ENCODE measurements at regions of chr4 and their contacts with region 1.

Region 1: DNA sequence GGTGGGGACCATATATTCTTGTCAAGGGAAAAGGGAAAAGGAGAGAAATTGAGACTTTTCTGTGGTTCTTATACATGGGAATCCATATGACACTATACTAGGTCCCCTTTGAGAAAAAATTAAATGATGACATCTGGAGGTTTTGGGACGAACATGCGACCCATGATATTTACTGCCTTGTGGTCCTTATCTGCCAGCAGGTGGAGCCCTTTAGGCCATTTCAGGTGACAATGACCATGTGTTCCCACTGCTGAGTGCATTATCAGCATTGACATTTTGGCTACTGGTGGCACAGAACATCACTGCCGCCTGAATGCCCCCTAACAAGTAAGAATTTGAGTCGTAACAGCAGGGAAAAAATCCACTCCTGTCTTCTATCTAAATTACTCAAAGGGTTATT is 843.4 kb downstream of the FSTL5 start:
- DNase-seq: peak; percentile 56
- ATAC-seq: peak; percentile 91
- H3K4me3 ChIP-seq: no peak overlapping the region
- H3K27ac ChIP-seq: no peak overlapping the region
- H3K4me1 ChIP-seq: no peaks in the 10 kb centered on the region
- H3K27me3 ChIP-seq: no peaks in the 10 kb centered on the region
- CTCF ChIP-seq: peak; percentile 63 to 89 (median 74)
- POLR2A ChIP-seq: no peak
- RAD21 ChIP-seq: peak; percentile 63

Region 2: DNA sequence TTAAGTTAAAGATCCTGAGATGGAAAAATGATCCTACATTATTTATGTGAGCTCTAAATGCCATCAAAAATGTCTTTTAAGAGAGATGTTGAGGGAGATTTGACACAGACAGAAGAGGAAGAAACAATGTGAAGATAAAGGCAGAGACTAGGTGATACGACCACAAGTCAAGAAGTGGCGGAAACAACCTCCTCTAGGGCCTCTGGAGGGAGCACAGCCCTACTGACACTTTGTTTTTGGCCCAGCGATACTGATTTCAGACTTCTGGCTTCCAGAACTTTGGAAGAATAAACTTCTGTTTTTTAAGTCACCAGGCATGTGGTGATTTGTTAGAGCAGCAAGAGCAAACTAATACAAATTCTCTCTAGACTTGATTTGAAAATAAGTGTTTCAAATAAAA is 372.7 kb before region 1 on chr4:
- CTCF ChIA-PET with region 1: no interaction called
- POLR2A ChIA-PET with region 1: no interaction called
- RAD21 ChIA-PET with region 1: no interaction called
- intact Hi-C with region 1: no loop called
- DNase-seq: no peak
- ATAC-seq: no peak
- H3K4me3 ChIP-seq: no peak overlapping the region
- H3K27ac ChIP-seq: no peak overlapping the region
- H3K4me1 ChIP-seq: no peaks in the 10 kb centered on the region
- H3K27me3 ChIP-seq: no peaks in the 10 kb centered on the region
- CTCF ChIP-seq: 0 out of 6 replicates have a peak, but pooled peaks of 1 of the 3 experiments have one; percentile 8
- POLR2A ChIP-seq: no peak
- RAD21 ChIP-seq: no peak

Region 3: GRCh38 chr4:161160718-161161117 is 159.7 kb before region 1 on chr4:
- CTCF ChIA-PET with region 1: no interaction called
- POLR2A ChIA-PET with region 1: no interaction called
- RAD21 ChIA-PET with region 1: no interaction called
- intact Hi-C with region 1: no loop called
- DNase-seq: no peak
- ATAC-seq: no peak
- H3K4me3 ChIP-seq: no peak overlapping the region
- H3K27ac ChIP-seq: no peak overlapping the region
- H3K4me1 ChIP-seq: no peaks in the 10 kb centered on the region
- H3K27me3 ChIP-seq: no peaks in the 10 kb centered on the region
- CTCF ChIP-seq: no peak
- POLR2A ChIP-seq: no peak
- RAD21 ChIP-seq: no peak

Region 4: GRCh38 chr4:161256716-161257115 is 63.7 kb before region 1 on chr4:
- CTCF ChIA-PET with region 1: no interaction called
- POLR2A ChIA-PET with region 1: no interaction called
- RAD21 ChIA-PET with region 1: no interaction called
- intact Hi-C with region 1: no loop called
- DNase-seq: peak; percentile 7
- ATAC-seq: peak; percentile 63
- H3K4me3 ChIP-seq: no peak overlapping the region
- H3K27ac ChIP-seq: no peak overlapping the region
- H3K4me1 ChIP-seq: no peaks in the 10 kb centered on the region
- H3K27me3 ChIP-seq: no peaks in the 10 kb centered on the region
- CTCF ChIP-seq: peak in 2 of 3 experiments; percentile 32 to 49; a peak in 4 of 6 replicates
- POLR2A ChIP-seq: no peak
- RAD21 ChIP-seq: peak; percentile 43

Region 5: GRCh38 chr4:161841759-161842158 is 521.4 kb after region 1 on chr4:
- CTCF ChIA-PET with region 1: no interaction called
- POLR2A ChIA-PET with region 1: no interaction called
- RAD21 ChIA-PET with region 1: no interaction called
- intact Hi-C with region 1: loop called (anchors 10 kb)
- DNase-seq: no peak
- ATAC-seq: peak; percentile 61; the same call in 1 of the 2 replicates
- H3K4me3 ChIP-seq: no peak overlapping the region
- H3K27ac ChIP-seq: no peak overlapping the region
- H3K4me1 ChIP-seq: no peaks in the 10 kb centered on the region
- H3K27me3 ChIP-seq: no peaks in the 10 kb centered on the region
- CTCF ChIP-seq: peak in 1 of 3 experiments; percentile 10; a peak in 1 of 6 replicates
- POLR2A ChIP-seq: no peak
- RAD21 ChIP-seq: peak; percentile 23; the same call in 1 of the 2 replicates

Region 6: GRCh38 chr4:161949946-161950725 is 629.8 kb after region 1 on chr4:
- CTCF ChIA-PET with region 1: no interaction called
- POLR2A ChIA-PET with region 1: no interaction called
- RAD21 ChIA-PET with region 1: no interaction called
- intact Hi-C with region 1: loop called (anchors 10 kb)
- DNase-seq: no peak
- ATAC-seq: no peak
- H3K4me3 ChIP-seq: no peak overlapping the region
- H3K27ac ChIP-seq: no peak overlapping the region
- H3K4me1 ChIP-seq: no peaks in the 10 kb centered on the region
- H3K27me3 ChIP-seq: no peaks in the 10 kb centered on the region
- CTCF ChIP-seq: no peak
- POLR2A ChIP-seq: no peak
- RAD21 ChIP-seq: no peak

Region 7: DNA sequence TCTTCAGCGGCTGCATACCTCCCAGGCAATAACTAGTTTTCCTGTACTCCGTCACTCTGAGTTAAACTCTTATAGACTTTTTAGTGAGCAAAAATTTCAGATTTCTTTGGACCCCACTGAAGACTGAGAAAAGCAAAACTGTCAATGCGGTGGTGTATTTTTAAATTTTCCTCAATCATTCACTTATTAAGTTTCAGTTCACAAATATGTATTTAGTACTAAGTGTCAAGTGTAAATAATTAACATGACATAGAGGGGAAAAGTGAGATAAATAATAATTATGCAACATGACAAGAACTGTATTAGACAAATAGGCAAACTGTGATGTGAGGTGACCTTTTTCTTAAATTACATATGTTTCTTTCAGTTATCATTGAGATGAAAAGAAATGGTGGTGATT is 1721.9 kb after region 1 on chr4:
- CTCF ChIA-PET with region 1: no interaction called
- POLR2A ChIA-PET with region 1: no interaction called
- RAD21 ChIA-PET with region 1: no interaction called
- intact Hi-C with region 1: loop called (anchors 10 kb)
- DNase-seq: no peak
- ATAC-seq: no peak
- H3K4me3 ChIP-seq: no peak overlapping the region
- H3K27ac ChIP-seq: no peak overlapping the region
- H3K4me1 ChIP-seq: no peaks in the 10 kb centered on the region
- H3K27me3 ChIP-seq: no peaks in the 10 kb centered on the region
- CTCF ChIP-seq: no peak
- POLR2A ChIP-seq: no peak
- RAD21 ChIP-seq: no peak